Colonic mucosa (tissue), 4 donors: ENCODE measurements at regions of chr17 and their contacts with region 1.

Region 1: GRCh38 chr17:42101513-42102319 is 3.4 kb upstream of the ZNF385C start:
- DNase-seq: peak; percentile 82
- H3K4me3 ChIP-seq: no peak overlapping the region
- H3K27ac ChIP-seq: no peak overlapping the region
- H3K4me1 ChIP-seq: no peaks in the 10 kb centered on the region
- H3K27me3 ChIP-seq: peaks cover 15% of the 10 kb centered on the region
- CTCF ChIP-seq: peak; percentile 90

Region 2: GRCh38 chr17:42067351-42068091 is 34.2 kb before region 1 on chr17:
- intact Hi-C with region 1: loop called (anchors 5 kb)
- DNase-seq: peak; percentile 81
- H3K4me3 ChIP-seq: no peak overlapping the region
- H3K27ac ChIP-seq: no peak overlapping the region
- H3K4me1 ChIP-seq: no peaks in the 10 kb centered on the region
- H3K27me3 ChIP-seq: peaks cover 16% of the 10 kb centered on the region
- CTCF ChIP-seq: peak; percentile 91